ENCODE measurements at regions of chrX and their contacts with region 1.

Region 1: GRCh38 chrX:68504237-68504636 is 5.4 kb downstream of the YIPF6 start:
- DNase-seq: peak; percentile 11
- H3K4me3 Mint-ChIP-seq: no peak overlapping the region
- H3K27ac Mint-ChIP-seq: peak overlapping the region; percentile 78
- H3K4me1 Mint-ChIP-seq: peaks cover 59% of the 10 kb centered on the region
- H3K27me3 Mint-ChIP-seq: no peaks in the 10 kb centered on the region

Region 2: GRCh38 chrX:68183612-68184214 is 320.5 kb before region 1 on chrX:
- intact Hi-C with region 1: loop called (anchors 10 kb)
- DNase-seq: no peak
- H3K4me3 Mint-ChIP-seq: no peak overlapping the region
- H3K27ac Mint-ChIP-seq: peak overlapping the region; percentile 22
- H3K4me1 Mint-ChIP-seq: peaks cover 29% of the 10 kb centered on the region
- H3K27me3 Mint-ChIP-seq: no peaks in the 10 kb centered on the region

Region 3: DNA sequence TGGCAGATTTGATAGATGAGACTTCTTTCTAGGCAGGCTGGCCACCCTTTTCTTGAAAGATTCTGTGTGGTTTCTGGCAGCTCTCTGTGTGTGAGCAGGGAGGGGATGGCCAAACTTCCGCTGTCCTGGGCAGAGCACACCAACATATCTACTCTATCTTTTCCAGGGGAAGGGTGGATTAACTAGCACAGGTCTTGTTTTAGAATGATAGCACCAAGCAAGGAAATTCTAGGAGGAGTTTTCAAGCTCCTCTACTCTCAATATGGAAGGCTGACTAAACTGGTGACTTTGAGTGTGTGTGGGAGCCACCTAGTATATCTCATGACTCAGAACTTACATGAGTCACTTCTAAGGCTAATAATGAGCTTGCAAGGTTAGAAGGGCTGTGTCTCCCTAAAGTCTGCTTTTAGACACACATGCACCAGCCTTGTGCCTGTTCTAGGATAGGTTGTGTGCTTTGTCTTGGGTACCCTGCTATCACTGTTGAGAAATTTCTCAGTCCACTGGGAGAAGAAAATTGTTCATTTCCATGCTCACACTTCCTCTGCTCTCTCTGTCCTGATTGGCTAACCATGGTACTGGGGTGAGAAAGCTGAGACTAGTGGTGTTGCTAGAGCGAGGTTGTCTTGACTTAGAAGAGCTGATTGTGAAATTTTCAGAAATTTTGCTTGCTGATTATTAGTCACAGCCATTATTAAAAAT is 67.5 kb after region 1 on chrX:
- intact Hi-C with region 1: loop called (anchors 2 kb)
- DNase-seq: no peak
- H3K4me3 Mint-ChIP-seq: no peak overlapping the region
- H3K27ac Mint-ChIP-seq: peak overlapping the region; percentile 60
- H3K4me1 Mint-ChIP-seq: peaks cover 29% of the 10 kb centered on the region
- H3K27me3 Mint-ChIP-seq: no peaks in the 10 kb centered on the region

Region 4: DNA sequence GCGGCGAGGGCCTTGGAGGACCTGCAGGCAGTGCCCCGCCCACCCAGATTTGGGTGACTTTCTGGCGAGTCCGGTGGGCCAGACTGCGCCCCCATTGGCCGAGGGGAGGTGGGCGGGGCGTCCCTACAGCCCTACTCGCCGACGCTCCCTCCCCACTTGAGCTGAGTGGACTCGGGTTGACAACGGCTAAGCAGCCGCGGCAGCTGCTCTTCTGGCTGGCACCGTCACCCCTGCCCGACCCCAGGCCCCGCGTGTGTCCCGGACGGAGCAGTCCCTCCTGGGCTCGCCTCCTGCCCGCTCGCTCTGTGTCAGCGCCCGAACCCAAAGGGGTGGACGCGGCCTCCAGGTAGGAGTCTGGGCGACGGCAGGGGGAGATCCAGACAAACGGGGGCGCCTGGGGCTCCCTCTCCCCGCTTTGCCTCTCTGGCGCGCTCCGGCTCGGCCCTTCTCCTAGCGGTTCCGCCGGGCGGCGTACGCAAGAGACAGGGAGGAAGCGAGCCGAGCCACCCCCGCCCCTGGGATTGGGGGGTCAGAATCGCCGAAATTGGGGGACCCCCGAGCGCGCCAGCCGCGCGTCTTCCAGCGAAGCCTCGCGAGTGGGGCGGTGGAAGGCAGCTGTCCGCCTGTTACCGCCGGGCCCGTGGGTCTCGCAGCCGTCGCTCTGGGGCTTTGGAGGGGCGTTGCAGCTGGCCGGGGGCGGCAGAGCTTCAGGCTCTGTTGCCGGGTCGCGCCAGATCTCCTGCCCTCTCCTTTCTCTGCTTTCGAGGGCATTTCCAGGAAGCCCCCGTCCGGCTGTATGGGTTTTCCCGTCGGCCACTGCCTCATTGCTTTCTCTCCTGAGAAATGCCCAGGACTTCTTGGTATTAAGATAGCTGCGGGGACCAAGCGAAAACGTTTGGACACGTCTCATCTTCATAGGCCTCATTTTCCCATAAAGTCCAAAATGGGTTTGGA is 189.5 kb after region 1 on chrX:
- intact Hi-C with region 1: loop called (anchors 5 kb)
- DNase-seq: no peak
- H3K4me3 Mint-ChIP-seq: peak overlapping the region; percentile 73
- H3K27ac Mint-ChIP-seq: peak overlapping the region; percentile 63
- H3K4me1 Mint-ChIP-seq: peaks cover 28% of the 10 kb centered on the region
- H3K27me3 Mint-ChIP-seq: no peaks in the 10 kb centered on the region

Measured in activated T-helper 2 cell treated with anti-CD3 and anti-CD28 coated beads, Interferon-gamma antibody, Interleukin-2, Interleukin-4, amounts not matched to agents 10 μg/mL and 5 μg/mL and 100 μg/mL, durations not matched to agents 14 hours and 24 hours and 36 hours (primary cell).